ENCODE measurements at regions of chr1 and their contacts with region 1.

Region 1: GRCh38 chr1:24415334-24415909 is at the start of gene NIPAL3:
- DNase-seq: peak; percentile 91 to 99 (median 97)
- ATAC-seq: peak; percentile 93
- H3K4me3 Mint-ChIP-seq: peak within 1 kb of the TSS; percentile 92 to 100 (median 98)
- H3K27ac Mint-ChIP-seq: peak within 1 kb of the TSS; percentile 86 to 98 (median 95)
- H3K4me1 Mint-ChIP-seq: peaks cover 38 to 88% (median 72%) of the 10 kb centered on the region in 4 donors
- H3K27me3 Mint-ChIP-seq: no peaks in the 10 kb centered on the region
- polyA plus RNA-seq, gene NIPAL3: 57.5 to 90.4 (median 89.5) TPM

Region 2: GRCh38 chr1:24206516-24207394 is 208.7 kb before region 1 on chr1:
- POLR2A ChIA-PET with region 1: no interaction called
- DNase-seq: no peak
- ATAC-seq: no peak
- H3K4me3 Mint-ChIP-seq: no peak overlapping the region
- H3K27ac Mint-ChIP-seq: peak overlapping the region in 1 of 10 donors; percentile 7
- H3K4me1 Mint-ChIP-seq: peaks cover 0 to 2% (median 1%) of the 10 kb centered on the region in 4 donors
- H3K27me3 Mint-ChIP-seq: peaks cover 0 to 3% (median 0%) of the 10 kb centered on the region in 5 donors

Region 3: DNA sequence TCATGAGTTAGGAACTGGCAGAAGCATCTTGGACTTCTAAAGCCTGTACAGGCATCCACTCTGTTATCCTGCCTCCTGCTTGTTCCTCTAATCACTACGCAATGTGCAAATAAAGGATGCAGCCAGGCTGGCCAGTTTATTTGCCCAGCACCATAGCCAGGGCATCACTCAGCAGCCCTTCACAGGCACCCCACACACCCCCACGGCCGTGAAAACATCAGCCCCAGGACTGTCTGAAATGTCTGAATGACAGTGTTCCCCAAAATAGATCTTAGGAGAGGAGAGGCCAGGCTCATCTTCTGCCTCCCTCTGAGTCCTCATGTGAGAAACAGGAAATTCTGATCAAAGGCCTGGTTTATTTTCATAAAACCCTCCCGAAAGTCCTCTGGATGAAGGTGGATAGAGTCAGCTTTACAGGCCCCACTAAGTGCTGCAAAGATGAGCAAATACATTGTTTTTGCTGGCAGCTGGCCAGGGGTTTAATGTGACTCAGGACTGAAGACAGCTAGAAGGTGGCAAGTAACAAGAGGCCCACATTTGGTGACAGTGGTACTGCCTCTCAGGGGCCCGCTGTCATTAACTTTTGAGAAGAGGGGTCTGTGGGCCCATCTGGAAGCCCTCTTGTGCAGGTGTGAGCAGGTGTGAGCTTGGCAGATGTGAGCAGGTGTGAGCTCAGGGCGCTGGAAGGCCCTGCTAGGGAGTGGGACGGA is 63.3 kb before region 1 on chr1:
- POLR2A ChIA-PET with region 1: no interaction called
- DNase-seq: no peak
- ATAC-seq: no peak
- H3K4me3 Mint-ChIP-seq: no peak overlapping the region
- H3K27ac Mint-ChIP-seq: peak overlapping the region in 1 of 10 donors; percentile 73
- H3K4me1 Mint-ChIP-seq: peaks cover 0 to 4% (median 2%) of the 10 kb centered on the region in 4 donors
- H3K27me3 Mint-ChIP-seq: peaks cover 0 to 11% (median 0%) of the 10 kb centered on the region in 5 donors

Region 4: DNA sequence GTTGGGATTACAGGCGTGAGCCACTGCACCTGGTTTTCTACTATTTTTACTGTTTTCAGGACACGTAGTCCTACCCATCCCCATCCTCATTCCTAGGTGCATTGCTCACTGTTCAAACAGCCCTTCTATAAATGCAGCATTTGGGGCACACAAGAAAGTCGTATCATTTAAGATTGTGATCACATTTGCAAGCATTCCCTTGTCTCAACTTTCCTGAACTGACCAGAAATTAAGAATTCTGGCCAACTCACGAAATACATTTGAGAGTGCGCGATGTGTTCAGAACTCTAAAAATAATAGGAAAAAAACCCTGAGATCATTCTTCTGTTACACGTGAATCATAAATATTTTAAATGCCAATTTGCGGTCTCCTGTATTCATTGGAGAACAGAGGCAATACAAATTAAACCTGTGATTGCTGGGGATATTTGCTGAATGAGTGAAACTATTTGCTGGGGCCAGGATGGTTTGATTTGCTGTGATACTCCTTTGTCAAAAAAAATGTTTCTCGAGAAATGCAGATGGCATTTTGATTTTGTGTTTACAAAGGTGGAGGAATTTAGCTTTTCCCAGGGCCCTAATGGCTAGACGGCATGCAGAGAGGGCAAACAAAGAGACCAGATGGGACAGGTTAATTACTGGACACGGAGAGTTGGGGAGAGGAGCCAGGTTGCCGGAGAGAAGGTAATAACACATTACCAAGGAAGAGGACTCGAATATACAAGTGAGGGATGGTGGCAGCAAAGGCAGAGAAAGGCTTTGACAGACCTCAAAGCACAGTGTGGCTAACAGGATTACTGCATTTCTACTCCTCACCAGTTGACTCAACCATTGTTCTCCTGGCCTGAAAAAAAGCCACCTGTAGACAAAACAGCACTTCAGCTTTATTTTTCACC is 40.3 kb before region 1 on chr1:
- POLR2A ChIA-PET with region 1: no interaction called
- DNase-seq: peak in 1 of 10 donors; percentile 4
- ATAC-seq: no peak
- H3K4me3 Mint-ChIP-seq: no peak overlapping the region
- H3K27ac Mint-ChIP-seq: peak overlapping the region in 2 of 10 donors; percentile 53 to 56
- H3K4me1 Mint-ChIP-seq: peaks cover 0 to 13% (median 1%) of the 10 kb centered on the region in 4 donors
- H3K27me3 Mint-ChIP-seq: no peaks in the 10 kb centered on the region

Region 5: DNA sequence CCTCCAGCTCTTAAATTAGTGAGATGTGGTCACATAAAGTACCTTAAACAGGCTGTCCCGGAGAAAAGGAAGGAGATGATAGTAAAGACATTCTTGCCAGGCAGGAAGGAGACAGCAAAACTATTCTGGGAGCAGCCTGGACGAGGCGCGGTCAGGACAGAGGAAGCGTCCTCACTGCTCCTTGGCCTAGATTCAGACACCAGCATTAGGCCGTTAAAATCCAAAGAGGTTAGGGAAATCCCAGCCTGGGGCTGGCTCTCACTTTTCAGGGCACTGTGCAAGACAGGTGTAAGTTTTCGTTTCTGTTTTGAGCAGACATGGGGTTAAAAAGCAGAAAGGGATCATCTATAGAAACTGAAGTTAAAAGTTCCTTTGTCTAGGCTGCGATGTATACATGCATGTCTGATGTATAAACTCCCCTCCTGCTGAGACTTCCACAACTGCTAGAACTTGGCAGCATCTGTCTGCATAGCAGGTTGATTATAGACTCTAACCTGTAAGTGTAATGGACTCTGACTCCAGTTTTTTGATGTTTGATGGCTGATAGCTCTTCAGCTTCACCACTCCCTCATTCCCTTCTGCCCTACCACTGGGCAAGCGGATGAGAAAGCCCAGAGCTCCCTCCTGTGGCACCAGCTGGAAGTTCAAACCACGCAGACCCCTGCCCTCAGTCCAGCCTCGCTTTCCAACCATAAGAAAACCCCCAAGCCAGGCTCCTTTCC is 23.4 kb before region 1 on chr1:
- POLR2A ChIA-PET with region 1: interaction called, 10 read pairs
- DNase-seq: peak in 8 of 10 donors; percentile 25 to 67 (median 44)
- ATAC-seq: peak; percentile 63 to 73
- H3K4me3 Mint-ChIP-seq: peak overlapping the region in 8 of 10 donors; percentile 48 to 85 (median 76)
- H3K27ac Mint-ChIP-seq: peak overlapping the region; percentile 76 to 95 (median 94)
- H3K4me1 Mint-ChIP-seq: peaks cover 18 to 33% (median 30%) of the 10 kb centered on the region in 4 donors
- H3K27me3 Mint-ChIP-seq: no peaks in the 10 kb centered on the region

Region 6: DNA sequence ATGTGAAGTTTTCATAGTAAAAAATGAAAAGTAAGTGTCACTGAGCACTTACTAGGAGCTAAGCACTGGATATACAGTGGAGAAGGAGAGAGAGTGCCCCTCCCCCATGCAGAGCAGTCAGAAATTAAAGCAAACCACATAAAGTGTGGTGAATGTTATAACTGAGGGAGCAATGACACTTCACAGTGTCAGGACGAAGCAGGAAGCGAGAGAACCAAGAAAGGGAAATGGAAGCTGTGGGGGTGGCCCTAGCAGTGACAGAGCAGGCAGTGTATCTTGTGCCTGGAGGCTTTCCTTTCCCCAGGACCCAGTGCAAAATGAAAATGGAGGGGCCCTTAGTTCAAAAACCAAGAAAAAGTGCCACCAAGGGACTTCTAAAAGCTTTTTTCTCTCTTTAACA is 65.7 kb after region 1 on chr1:
- POLR2A ChIA-PET with region 1: interaction called, 37 read pairs
- DNase-seq: peak in 8 of 10 donors; percentile 51 to 80 (median 62)
- ATAC-seq: peak; percentile 59 to 68
- H3K4me3 Mint-ChIP-seq: peak overlapping the region; percentile 60 to 89 (median 82)
- H3K27ac Mint-ChIP-seq: peak overlapping the region; percentile 87 to 100 (median 98)
- H3K4me1 Mint-ChIP-seq: peaks cover 23 to 79% (median 71%) of the 10 kb centered on the region in 4 donors
- H3K27me3 Mint-ChIP-seq: no peaks in the 10 kb centered on the region

Region 7: DNA sequence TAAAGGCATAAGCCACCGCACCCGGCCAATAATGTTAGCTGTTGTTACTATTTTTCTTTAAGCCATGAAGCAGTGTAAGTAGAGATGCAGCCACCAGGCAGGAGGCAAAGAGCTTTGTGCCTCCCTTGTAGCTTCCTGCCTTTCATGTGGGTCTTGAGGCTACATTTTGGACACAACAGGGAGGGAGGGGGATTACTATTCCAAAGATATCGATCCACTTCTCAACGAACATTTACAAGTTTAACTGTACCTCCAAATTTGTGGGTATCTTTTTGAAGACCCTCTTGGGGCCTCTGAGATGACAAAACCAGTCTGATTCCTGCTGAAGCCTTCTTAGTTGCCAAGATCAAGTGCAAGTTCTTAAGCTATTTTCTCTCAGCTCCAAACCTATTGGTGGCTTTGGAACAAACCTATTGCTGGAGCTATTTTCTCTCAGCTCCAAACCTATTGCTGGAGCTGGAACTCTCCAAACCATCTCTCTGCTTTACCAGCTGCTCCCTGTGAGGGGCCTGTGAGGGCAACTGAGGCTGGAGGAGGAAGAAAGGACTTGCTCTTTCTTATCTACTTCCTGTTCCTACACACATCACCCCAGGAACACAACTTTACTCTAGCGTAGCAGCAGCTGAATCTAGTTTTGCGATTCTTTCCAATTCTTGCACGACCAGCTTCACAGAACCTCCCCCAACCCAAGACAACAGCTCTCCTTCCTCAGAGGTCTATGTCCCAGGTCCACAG is 71.1 kb after region 1 on chr1:
- POLR2A ChIA-PET with region 1: interaction called, 37 read pairs
- DNase-seq: peak in 8 of 10 donors; percentile 53 to 82 (median 70)
- ATAC-seq: peak; percentile 48 to 63
- H3K4me3 Mint-ChIP-seq: peak overlapping the region; percentile 52 to 86 (median 73)
- H3K27ac Mint-ChIP-seq: peak overlapping the region; percentile 87 to 100 (median 94)
- H3K4me1 Mint-ChIP-seq: peaks cover 34 to 85% (median 73%) of the 10 kb centered on the region in 4 donors
- H3K27me3 Mint-ChIP-seq: no peaks in the 10 kb centered on the region

Region 8: DNA sequence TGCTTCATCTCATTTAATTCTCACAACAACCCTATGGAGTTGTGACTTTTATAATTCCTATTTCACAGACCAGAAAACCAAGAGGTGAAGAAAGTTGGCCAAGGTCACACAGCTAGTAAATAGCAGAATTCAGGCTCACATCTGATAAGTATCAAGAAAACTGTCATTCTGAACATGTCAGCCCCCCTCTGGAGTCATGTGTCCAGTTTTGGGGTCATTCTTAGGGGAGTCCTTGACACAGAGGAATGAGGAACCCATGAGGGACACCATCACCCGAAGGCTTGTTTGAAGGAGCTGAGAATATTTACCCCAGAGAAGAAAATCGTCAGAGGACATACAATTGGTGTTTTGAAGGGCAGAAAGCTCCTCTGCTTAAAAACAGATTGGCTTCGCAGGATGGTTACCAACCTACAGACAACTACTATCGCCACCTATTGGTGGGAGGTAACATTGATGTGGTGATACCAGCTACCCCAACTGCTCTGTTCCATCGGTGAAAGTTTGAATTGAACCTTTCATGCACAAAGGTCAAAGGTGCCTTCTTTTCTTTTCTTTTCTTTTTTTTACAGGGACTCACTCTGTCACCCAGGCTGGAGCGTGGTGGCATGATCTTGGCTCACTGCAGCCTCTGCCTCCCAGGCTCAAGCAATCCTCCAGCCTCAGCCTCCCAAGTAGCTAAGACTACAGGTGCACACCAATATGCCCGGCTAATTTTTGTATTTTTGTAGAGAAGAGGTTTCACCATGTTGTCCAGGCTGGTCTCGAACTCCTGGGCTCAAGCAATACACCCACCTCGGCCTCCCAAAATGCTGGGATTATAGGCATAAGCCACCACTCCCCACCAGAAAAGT is 171.8 kb after region 1 on chr1:
- POLR2A ChIA-PET with region 1: interaction called, 14 read pairs
- DNase-seq: peak in 9 of 10 donors; percentile 36 to 82 (median 74)
- ATAC-seq: peak; percentile 100
- H3K4me3 Mint-ChIP-seq: peak overlapping the region in 4 of 10 donors; percentile 15 to 53 (median 26)
- H3K27ac Mint-ChIP-seq: peak overlapping the region; percentile 55 to 94 (median 90)
- H3K4me1 Mint-ChIP-seq: peaks cover 9 to 10% (median 9%) of the 10 kb centered on the region in 4 donors
- H3K27me3 Mint-ChIP-seq: no peaks in the 10 kb centered on the region